ENCODE measurements at regions of chr9 and their contacts with region 1.

Region 1: DNA sequence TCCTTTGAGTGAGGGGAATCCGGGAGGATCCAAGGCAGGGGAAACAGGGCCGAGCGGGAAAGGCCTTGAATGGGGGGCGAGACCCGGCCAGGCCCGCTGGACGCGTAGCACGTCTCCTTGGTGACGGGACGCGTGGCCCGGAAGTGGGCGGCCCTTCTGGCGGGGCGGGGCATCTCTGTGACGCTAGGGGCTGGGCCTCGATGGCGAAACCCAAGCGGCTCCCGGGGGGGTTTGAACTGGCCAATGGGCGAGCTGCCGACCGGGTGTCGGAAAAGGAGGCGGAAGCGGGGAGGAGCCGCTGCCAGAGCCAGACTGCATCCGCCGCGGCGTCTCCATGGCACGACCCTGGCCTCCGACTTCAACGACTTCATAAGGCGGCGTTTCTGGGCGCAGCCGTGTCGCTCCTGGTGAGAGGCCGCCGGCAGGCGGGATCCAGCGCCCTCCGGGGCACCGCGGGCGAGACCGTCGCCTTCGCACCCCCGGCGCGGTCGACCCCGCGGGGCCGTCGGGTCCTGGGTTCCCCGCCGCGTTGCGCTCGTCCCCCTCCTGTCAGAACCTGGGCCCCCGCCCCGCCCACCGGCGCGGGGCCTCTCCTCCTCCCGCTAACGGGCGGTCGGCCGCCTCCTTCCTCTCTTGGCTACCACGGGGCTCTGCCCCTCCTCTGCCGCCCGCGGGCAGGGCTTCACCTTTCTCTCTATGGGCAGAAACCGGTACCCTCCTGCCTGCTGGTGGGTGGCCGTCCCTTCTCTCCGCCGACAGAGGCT is at the start of gene ODF2:
- DNase-seq: peak; percentile 99
- H3K4me3 Mint-ChIP-seq: peak within 1 kb of the TSS; percentile 90
- H3K27ac Mint-ChIP-seq: peak within 1 kb of the TSS; percentile 84
- H3K4me1 Mint-ChIP-seq: peaks cover 15% of the 10 kb centered on the region
- H3K27me3 Mint-ChIP-seq: no peaks in the 10 kb centered on the region
- total RNA-seq, gene ODF2: 73.6 to 73.7 TPM

Region 2: DNA sequence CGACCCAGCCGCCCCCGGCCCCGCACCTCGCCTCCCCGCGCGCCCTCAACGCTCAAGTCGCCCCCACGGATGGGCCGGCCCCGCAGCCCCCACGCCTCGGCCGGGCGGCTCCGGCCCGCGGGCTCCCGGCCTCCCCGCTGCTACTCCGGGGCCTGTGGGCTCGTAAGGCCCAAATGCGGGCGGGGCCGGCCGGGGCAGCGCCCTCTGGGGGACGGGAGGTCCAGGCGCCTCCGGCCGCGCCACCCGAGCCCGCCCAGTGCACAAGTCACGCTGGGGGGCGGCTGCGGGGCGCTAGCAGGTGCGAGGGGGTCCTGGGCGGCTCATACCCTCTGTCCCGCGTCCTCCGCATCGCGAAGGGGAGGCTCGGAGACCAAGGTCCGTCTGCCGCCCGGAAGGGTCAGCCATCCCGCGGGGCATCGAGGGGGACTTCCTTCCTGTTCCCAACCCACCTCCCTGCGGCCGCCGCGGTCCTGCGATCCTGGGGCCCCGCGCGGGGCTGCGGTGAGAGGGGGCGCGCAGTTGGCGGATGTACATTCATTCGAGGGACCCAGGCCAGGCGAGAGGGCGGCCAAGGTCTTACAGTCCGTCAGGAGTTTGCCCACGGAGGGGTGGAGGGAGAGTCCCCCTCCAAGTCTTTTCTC is 264.5 kb before region 1 on chr9 and contains the start of gene CIZ1:
- CTCF ChIA-PET with region 1: no interaction called
- intact Hi-C with region 1: loop called (anchors 1 kb)
- DNase-seq: peak; percentile 71
- H3K4me3 Mint-ChIP-seq: peak within 1 kb of the TSS; percentile 96
- H3K27ac Mint-ChIP-seq: peak within 1 kb of the TSS; percentile 83
- H3K4me1 Mint-ChIP-seq: peaks cover 21% of the 10 kb centered on the region
- H3K27me3 Mint-ChIP-seq: no peaks in the 10 kb centered on the region
- total RNA-seq, gene CIZ1: 79.5 to 82.8 TPM

Region 3: GRCh38 chr9:128339771-128340690 is 116.0 kb before region 1 on chr9 and contains the start of gene SLC27A4:
- CTCF ChIA-PET with region 1: no interaction called
- intact Hi-C with region 1: loop called (anchors 1 kb)
- DNase-seq: peak; percentile 78
- H3K4me3 Mint-ChIP-seq: peak within 1 kb of the TSS; percentile 93
- H3K27ac Mint-ChIP-seq: peak within 1 kb of the TSS; percentile 69
- H3K4me1 Mint-ChIP-seq: peaks cover 5% of the 10 kb centered on the region
- H3K27me3 Mint-ChIP-seq: no peaks in the 10 kb centered on the region
- total RNA-seq, gene SLC27A4: 5.7 to 6.8 TPM

Region 4: GRCh38 chr9:128438343-128439109 is 17.5 kb before region 1 on chr9:
- CTCF ChIA-PET with region 1: interaction called, 8 read pairs
- intact Hi-C with region 1: loop called (anchors 1 kb)
- DNase-seq: peak; percentile 91
- H3K4me3 Mint-ChIP-seq: no peak overlapping the region
- H3K27ac Mint-ChIP-seq: no peak overlapping the region
- H3K4me1 Mint-ChIP-seq: no peaks in the 10 kb centered on the region
- H3K27me3 Mint-ChIP-seq: no peaks in the 10 kb centered on the region

Region 5: DNA sequence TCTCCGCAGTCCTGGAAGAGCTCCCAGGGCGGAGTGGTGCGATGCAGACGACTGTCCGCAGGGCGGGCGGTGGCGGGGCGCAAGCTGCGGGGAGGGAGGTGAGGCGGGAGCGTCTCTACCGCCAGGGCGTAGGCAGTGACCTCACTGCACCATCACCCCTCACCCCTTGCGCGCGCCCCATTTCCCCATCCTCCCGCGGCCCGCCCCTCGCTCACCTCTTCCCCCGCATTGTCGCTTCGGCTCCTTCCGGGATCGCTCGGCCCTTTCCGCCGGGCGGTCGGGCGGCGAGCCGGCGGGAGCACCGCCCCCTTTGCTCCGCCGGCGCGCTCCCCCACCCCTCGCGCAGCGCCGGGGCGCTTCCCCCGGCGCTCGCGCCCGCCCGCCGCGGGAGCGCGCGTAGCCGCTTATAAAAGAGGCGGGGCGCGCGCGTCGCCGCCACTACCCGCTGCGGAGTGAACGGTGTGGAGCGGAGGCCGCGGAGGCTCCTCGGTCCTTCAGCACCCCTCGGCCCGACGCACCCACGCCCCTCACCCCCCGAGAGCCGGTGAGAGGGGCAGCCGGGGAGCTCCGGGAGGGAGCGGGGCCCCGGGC is 96.2 kb after region 1 on chr9 and contains the start of gene SPTAN1:
- CTCF ChIA-PET with region 1: no interaction called
- intact Hi-C with region 1: loop called (anchors 1 kb)
- DNase-seq: peak; percentile 97
- H3K4me3 Mint-ChIP-seq: peak within 1 kb of the TSS; percentile 85
- H3K27ac Mint-ChIP-seq: peak within 1 kb of the TSS; percentile 84
- H3K4me1 Mint-ChIP-seq: peaks cover 42% of the 10 kb centered on the region
- H3K27me3 Mint-ChIP-seq: no peaks in the 10 kb centered on the region
- total RNA-seq, gene SPTAN1: 162 to 183 TPM

Region 6: GRCh38 chr9:128829477-128830251 is 373.6 kb after region 1 on chr9 and contains the start of gene SPOUT1:
- CTCF ChIA-PET with region 1: no interaction called
- intact Hi-C with region 1: loop called (anchors 1 kb)
- DNase-seq: peak; percentile 95
- H3K4me3 Mint-ChIP-seq: peak within 1 kb of the TSS; percentile 92
- H3K27ac Mint-ChIP-seq: peak within 1 kb of the TSS; percentile 86
- H3K4me1 Mint-ChIP-seq: peaks cover 18% of the 10 kb centered on the region
- H3K27me3 Mint-ChIP-seq: no peaks in the 10 kb centered on the region
- total RNA-seq, gene SPOUT1: 72.9 to 82.3 TPM